Activated naive CD4-positive, alpha-beta T cell treated with anti-CD3 and anti-CD28 coated beads for 36 hours (primary cell): ENCODE measurements at regions of chr5 and their contacts with region 1.

Region 1: DNA sequence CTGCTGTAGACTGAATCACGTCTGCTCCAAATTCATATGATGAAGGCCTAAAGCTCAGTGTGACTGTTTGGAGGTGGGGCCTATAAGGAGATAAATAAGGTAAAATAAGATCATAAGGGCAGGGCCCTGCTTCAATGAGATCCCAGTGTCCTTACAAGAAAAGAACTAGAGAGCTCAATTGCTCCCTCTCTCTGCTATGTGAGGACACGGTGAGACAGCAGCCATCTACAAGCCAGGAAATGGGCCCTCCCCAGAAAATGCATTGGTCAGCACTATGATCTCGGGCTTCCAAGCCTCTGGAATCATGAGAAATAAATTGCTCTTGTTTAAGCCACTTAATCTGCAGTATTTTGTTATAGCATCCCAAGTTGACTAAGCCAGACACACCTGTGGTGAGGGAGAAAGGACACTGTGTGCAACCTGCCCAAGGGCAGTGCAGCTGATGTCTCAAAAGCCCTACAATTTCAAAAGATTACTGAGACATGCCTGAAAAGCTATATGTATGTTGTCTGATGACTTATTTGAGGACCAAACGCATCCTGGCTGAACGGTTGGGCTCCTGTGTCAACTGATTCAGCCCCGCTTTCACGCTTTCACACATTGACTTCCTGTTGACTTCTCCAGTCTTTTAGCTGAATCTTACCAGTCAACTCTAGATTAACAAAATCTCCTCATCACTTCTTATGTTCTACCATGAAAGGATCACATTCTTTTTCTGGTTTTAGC is 13.2 kb downstream of the GZMK start:
- DNase-seq: peak; percentile 92
- H3K4me3 Mint-ChIP-seq: no peak overlapping the region
- H3K27ac Mint-ChIP-seq: peak overlapping the region; percentile 83
- H3K4me1 Mint-ChIP-seq: peaks cover 20% of the 10 kb centered on the region
- H3K27me3 Mint-ChIP-seq: no peaks in the 10 kb centered on the region

Region 2: DNA sequence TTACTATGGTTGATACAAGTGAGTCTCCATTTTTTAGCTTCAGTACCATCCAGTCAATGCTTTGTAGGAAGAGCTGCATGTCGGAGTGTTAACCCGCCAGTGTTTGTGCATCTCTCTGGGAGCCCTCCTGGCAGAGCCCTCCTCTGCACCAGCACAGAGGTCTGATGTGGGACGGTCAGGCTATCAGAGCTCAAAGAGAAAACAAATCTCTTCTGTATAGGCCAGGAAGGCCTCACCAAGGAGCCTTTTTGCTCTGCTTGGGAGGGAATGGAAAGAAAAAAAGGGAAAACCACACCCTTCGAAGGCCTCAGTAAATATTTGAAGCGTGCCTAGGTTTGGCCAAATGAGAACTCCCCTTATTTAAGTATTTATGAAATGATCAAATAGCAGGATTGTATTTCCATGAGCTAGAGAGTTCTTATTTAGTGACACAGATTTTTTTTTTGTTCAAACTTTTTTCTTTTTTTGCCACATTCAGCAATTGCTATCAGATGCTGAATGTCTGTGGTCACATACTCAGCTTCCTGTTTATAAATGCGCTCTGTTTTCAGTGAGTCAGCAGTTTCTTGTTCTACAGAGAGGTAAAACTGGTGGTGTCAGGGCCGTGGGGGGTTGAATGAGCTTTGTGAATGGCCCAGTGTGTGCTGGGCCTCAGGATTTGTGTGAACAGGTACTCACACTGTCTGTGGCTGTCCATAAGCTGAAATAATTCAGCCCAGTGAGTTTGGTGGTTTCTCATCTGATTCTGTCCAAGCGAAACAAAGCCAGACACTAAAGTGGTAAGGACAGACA is 293.0 kb before region 1 on chr5:
- CTCF ChIA-PET with region 1: no interaction called
- intact Hi-C with region 1: loop called (anchors 5 kb)
- DNase-seq: peak; percentile 66
- H3K4me3 Mint-ChIP-seq: no peak overlapping the region
- H3K27ac Mint-ChIP-seq: peak overlapping the region; percentile 54
- H3K4me1 Mint-ChIP-seq: peaks cover 11% of the 10 kb centered on the region
- H3K27me3 Mint-ChIP-seq: no peaks in the 10 kb centered on the region

Region 3: DNA sequence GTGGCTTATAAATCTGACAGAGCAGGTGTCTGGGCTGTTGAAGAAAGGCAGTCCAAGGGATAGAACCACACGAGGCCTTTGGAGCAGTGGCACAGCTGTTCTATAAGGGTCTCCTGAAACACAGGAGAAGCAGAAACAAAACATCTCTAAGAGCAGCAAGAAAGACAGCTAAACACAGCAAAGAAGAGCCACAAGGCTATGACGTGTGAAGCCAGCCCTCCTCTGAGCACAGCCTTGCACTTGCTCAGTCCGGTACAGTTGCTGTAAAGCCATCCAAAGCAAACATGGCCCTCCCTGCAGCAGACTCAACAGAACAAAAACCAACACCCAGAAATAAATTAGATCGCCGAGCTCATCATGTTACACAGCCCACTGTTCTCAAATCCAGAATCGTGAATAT is 15.8 kb before region 1 on chr5:
- CTCF ChIA-PET with region 1: interaction called, 25 read pairs
- intact Hi-C with region 1: loop called (anchors 1 kb)
- DNase-seq: no peak
- H3K4me3 Mint-ChIP-seq: no peak overlapping the region
- H3K27ac Mint-ChIP-seq: no peak overlapping the region
- H3K4me1 Mint-ChIP-seq: peaks cover 41% of the 10 kb centered on the region
- H3K27me3 Mint-ChIP-seq: no peaks in the 10 kb centered on the region

Region 4: GRCh38 chr5:55072666-55073065 is 35.5 kb after region 1 on chr5:
- CTCF ChIA-PET with region 1: interaction called, 6 read pairs
- intact Hi-C with region 1: loop called (anchors 1 kb)
- DNase-seq: no peak
- H3K4me3 Mint-ChIP-seq: no peak overlapping the region
- H3K27ac Mint-ChIP-seq: peak overlapping the region; percentile 34
- H3K4me1 Mint-ChIP-seq: peaks cover 33% of the 10 kb centered on the region
- H3K27me3 Mint-ChIP-seq: no peaks in the 10 kb centered on the region

Region 5: GRCh38 chr5:55102348-55102747 is 65.1 kb after region 1 on chr5 and contains the start of gene GZMA:
- CTCF ChIA-PET with region 1: interaction called, 3 read pairs
- intact Hi-C with region 1: loop called (anchors 1 kb)
- DNase-seq: peak; percentile 56
- H3K4me3 Mint-ChIP-seq: peak within 1 kb of the TSS; percentile 30
- H3K27ac Mint-ChIP-seq: no peak within 1 kb of the TSS
- H3K4me1 Mint-ChIP-seq: peaks cover 58% of the 10 kb centered on the region
- H3K27me3 Mint-ChIP-seq: peaks cover 9% of the 10 kb centered on the region
- total RNA-seq, gene GZMA: 0.24 TPM in 1 of 2 experiments, not detected in the other

Region 6: DNA sequence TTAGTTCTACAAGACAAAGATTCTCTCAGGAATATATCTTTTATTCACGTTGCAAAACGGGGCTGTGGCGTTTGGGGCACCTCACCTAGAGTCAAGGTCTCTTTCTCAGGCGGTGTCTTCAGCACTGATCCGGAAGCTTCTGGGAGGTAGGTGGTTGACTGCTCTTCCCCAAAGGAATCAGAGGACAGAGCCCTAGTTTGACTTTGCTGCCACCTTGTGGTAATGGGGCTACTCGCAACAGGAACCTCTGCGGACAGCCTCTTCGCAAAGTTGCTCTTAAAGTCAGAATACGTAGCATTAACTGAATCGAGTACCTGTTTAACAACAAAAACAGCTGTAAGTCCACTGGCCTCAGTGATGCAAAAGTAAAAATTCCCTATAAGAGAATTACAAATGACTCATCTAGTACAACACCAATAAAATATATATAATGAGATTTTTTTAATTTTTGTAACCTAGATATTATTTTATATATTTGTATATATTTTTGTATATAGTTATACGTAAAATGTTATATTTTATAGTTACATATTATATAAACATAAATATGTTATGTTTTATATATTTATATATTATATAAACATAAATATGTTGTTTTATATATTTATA is 109.4 kb after region 1 on chr5:
- CTCF ChIA-PET with region 1: interaction called, 3 read pairs
- intact Hi-C with region 1: loop called (anchors 5 kb)
- DNase-seq: peak; percentile 90
- H3K4me3 Mint-ChIP-seq: no peak overlapping the region
- H3K27ac Mint-ChIP-seq: no peak overlapping the region
- H3K4me1 Mint-ChIP-seq: peaks cover 12% of the 10 kb centered on the region
- H3K27me3 Mint-ChIP-seq: peaks cover 4% of the 10 kb centered on the region

Region 7: DNA sequence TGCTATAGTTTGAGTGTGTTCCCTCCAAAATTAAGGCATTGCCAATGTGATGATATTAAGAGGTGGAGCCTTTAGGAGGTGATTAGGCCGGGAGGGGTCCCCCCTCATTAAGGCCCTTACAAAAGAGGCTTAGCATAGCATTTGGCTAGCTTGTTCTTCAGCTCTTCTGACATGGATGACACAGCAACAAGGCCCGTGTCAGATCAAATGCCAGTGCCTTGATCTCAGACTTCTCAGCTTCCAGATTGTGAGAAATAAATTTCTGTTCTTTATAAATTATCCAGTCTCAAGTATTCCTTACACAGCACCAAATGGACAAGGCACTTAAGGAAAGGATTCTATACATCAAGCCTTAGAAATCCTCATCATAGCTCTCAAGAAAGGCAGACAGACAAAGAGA is 643.1 kb after region 1 on chr5:
- CTCF ChIA-PET with region 1: no interaction called
- intact Hi-C with region 1: no loop called
- DNase-seq: no peak
- H3K4me3 Mint-ChIP-seq: no peak overlapping the region
- H3K27ac Mint-ChIP-seq: no peak overlapping the region
- H3K4me1 Mint-ChIP-seq: no peaks in the 10 kb centered on the region
- H3K27me3 Mint-ChIP-seq: no peaks in the 10 kb centered on the region